HepG2 (cell line): ENCODE measurements at regions of chr15 and their contacts with region 1.

Region 1: GRCh38 chr15:65032801-65033537 is 3.5 kb upstream of the MTFMT start:
- DNase-seq: peak; percentile 95
- ATAC-seq: peak; percentile 94
- H3K4me3 ChIP-seq: peak overlapping the region; percentile 32 to 52 (median 34); a peak in 5 of 6 replicates
- H3K27ac ChIP-seq: peak overlapping the region; percentile 31
- H3K4me1 ChIP-seq: peaks cover 64% of the 10 kb centered on the region
- H3K27me3 ChIP-seq: no peaks in the 10 kb centered on the region; a peak in 1 of 5 replicates
- CTCF ChIP-seq: peak; percentile 99
- EP300 ChIP-seq: 0 out of 4 replicates have a peak, but pooled peaks of 1 of the 2 experiments have one; percentile 15
- POLR2A ChIP-seq: peak in 1 of 2 experiments; percentile 52; a peak in 1 of 4 replicates
- RAD21 ChIP-seq: peak; percentile 98

Region 2: GRCh38 chr15:64749999-64750657 is 282.8 kb before region 1 on chr15:
- CTCF ChIA-PET with region 1: no interaction called
- POLR2A ChIA-PET with region 1: no interaction called
- in situ Hi-C with region 1: no loop called
- intact Hi-C with region 1: no loop called
- DNase-seq: no peak
- ATAC-seq: peak; percentile 64
- H3K4me3 ChIP-seq: no peak overlapping the region
- H3K27ac ChIP-seq: no peak overlapping the region
- H3K4me1 ChIP-seq: peaks cover 12% of the 10 kb centered on the region
- H3K27me3 ChIP-seq: peaks cover 3 to 72% of the 10 kb centered on the region in 2 experiments; a peak in 4 of 5 replicates
- CTCF ChIP-seq: no peak
- EP300 ChIP-seq: no peak
- POLR2A ChIP-seq: no peak
- RAD21 ChIP-seq: no peak

Region 3: GRCh38 chr15:64989416-64990167 is 43.4 kb before region 1 on chr15 and contains the start of gene SPG21:
- CTCF ChIA-PET with region 1: no interaction called
- POLR2A ChIA-PET with region 1: no interaction called
- in situ Hi-C with region 1: no loop called
- intact Hi-C with region 1: no loop called
- DNase-seq: peak; percentile 73
- ATAC-seq: peak; percentile 91
- H3K4me3 ChIP-seq: peak within 1 kb of the TSS; percentile 60 to 100 (median 84)
- H3K27ac ChIP-seq: peak within 1 kb of the TSS; percentile 82
- H3K4me1 ChIP-seq: peaks cover 54% of the 10 kb centered on the region
- H3K27me3 ChIP-seq: no peaks in the 10 kb centered on the region; a peak in 1 of 5 replicates
- CTCF ChIP-seq: no peak
- EP300 ChIP-seq: no peak
- POLR2A ChIP-seq: peak; percentile 40 to 53; a peak in 3 of 4 replicates
- RAD21 ChIP-seq: no peak; the same call in 1 of the 2 replicates
- total RNA-seq, gene SPG21: 42.4 and 53.0 TPM in 2 replicates

Region 4: DNA sequence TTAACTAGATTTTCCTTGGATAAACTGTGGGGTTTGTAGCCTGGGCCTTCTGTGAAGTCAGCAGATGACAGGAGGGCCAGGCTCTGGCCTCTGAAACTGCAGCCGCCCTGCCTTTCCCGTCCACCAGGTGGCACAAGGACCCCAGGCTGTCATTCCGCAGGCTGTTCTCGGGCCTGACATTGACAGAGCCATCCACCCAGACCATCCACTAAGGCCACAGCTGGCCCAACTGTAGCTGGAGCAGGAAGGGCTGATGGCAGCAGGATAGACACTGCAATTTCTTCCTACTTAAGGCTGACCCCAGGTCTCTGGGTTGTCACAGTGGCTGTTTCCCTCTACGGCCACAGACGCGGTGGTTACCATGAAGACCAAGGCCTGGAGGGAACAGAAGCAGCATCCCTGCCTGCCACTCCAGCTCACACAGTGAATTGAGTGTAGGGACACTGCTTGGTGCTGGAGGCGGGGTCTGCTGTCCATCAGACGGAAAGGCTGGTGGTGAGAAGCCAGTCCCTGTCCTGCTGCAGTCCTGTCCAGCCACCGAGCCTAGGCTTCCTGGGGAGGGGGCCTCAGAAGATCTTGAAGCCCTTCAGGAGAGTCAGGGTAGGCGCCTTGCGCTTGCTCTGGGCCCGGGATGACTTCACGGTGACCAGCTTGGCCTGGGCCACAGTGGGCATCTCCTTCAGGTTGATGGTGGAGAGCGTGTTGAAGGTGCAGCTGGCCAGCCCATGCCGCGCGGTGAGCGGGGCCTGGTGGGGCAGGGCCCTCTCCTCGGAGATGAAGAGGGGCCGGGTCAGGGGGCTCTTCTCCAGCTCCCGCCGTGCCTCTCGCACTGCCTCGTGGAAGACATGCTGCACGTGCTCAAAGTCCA is 21.6 kb after region 1 on chr15:
- CTCF ChIA-PET with region 1: interaction called, 34 read pairs
- POLR2A ChIA-PET with region 1: interaction called, 4 read pairs
- in situ Hi-C with region 1: no loop called
- intact Hi-C with region 1: loop called (anchors 1 kb)
- DNase-seq: peak; percentile 64
- ATAC-seq: peak; percentile 75
- H3K4me3 ChIP-seq: no peak overlapping the region
- H3K27ac ChIP-seq: no peak overlapping the region
- H3K4me1 ChIP-seq: peaks cover 70% of the 10 kb centered on the region
- H3K27me3 ChIP-seq: no peaks in the 10 kb centered on the region
- CTCF ChIP-seq: peak; percentile 98
- EP300 ChIP-seq: no peak
- POLR2A ChIP-seq: no peak
- RAD21 ChIP-seq: peak; percentile 98

Region 5: GRCh38 chr15:65086017-65086679 is 53.2 kb after region 1 on chr15:
- CTCF ChIA-PET with region 1: interaction called, 34 read pairs
- POLR2A ChIA-PET with region 1: interaction called, 7 read pairs
- in situ Hi-C with region 1: loop called (anchors 10 kb)
- intact Hi-C with region 1: loop called (anchors 1 kb)
- DNase-seq: peak; percentile 72
- ATAC-seq: peak; percentile 76
- H3K4me3 ChIP-seq: no peak overlapping the region; a peak in 1 of 6 replicates
- H3K27ac ChIP-seq: no peak overlapping the region
- H3K4me1 ChIP-seq: peaks cover 96% of the 10 kb centered on the region
- H3K27me3 ChIP-seq: peaks cover 0 to 21% of the 10 kb centered on the region in 2 experiments; a peak in 2 of 5 replicates
- CTCF ChIP-seq: peak; percentile 88
- EP300 ChIP-seq: no peak
- POLR2A ChIP-seq: no peak
- RAD21 ChIP-seq: peak; percentile 60

Region 6: GRCh38 chr15:65133548-65134200 is 100.7 kb after region 1 on chr15 and contains the start of gene PDCD7:
- CTCF ChIA-PET with region 1: no interaction called
- POLR2A ChIA-PET with region 1: no interaction called
- in situ Hi-C with region 1: no loop called
- intact Hi-C with region 1: loop called (anchors 1 kb)
- DNase-seq: peak; percentile 90
- ATAC-seq: peak; percentile 91
- H3K4me3 ChIP-seq: peak within 1 kb of the TSS; percentile 87 to 97 (median 89)
- H3K27ac ChIP-seq: peak within 1 kb of the TSS; percentile 73
- H3K4me1 ChIP-seq: peaks cover 22% of the 10 kb centered on the region
- H3K27me3 ChIP-seq: no peaks in the 10 kb centered on the region; a peak in 1 of 5 replicates
- CTCF ChIP-seq: no peak
- EP300 ChIP-seq: 0 out of 4 replicates have a peak, but pooled peaks of 1 of the 2 experiments have one; percentile 32
- POLR2A ChIP-seq: peak; percentile 93 to 97
- RAD21 ChIP-seq: no peak; the same call in 1 of the 2 replicates
- total RNA-seq, gene PDCD7: 14.7 and 15.8 TPM in 2 replicates

Region 7: GRCh38 chr15:65292938-65293518 is 260.1 kb after region 1 on chr15:
- CTCF ChIA-PET with region 1: no interaction called
- POLR2A ChIA-PET with region 1: no interaction called
- in situ Hi-C with region 1: loop called (anchors 10 kb)
- intact Hi-C with region 1: loop called (anchors 5 kb)
- DNase-seq: peak; percentile 45
- ATAC-seq: no peak
- H3K4me3 ChIP-seq: no peak overlapping the region
- H3K27ac ChIP-seq: no peak overlapping the region
- H3K4me1 ChIP-seq: peaks cover 44% of the 10 kb centered on the region
- H3K27me3 ChIP-seq: no peaks in the 10 kb centered on the region
- CTCF ChIP-seq: no peak
- EP300 ChIP-seq: no peak
- POLR2A ChIP-seq: no peak
- RAD21 ChIP-seq: no peak